ENCODE measurements at regions of chr9 and their contacts with region 1.

Region 1: GRCh38 chr9:119537138-119537537 is 167.9 kb upstream of the BRINP1 start:
- DNase-seq: no peak

Region 2: DNA sequence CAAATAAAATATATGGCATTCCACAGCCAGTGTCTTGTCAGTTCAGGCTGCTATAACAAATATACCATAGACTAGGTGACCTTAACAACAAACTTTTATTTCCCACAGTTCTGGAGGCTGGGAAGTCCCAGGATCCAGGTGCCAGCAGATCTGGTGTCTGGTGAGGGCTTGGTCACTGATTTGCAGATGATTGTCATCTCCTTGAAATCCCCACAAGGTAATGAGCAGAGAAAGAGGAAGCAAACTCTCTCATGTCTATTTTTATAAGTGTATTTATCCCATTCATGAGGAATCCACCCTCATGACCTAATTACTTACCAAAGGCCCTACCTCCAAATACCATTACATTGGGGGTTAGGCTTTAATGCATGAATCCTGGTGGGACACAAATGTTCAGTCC is 1169.8 kb before region 1 on chr9:
- intact Hi-C with region 1: loop called in 1 of 2 experiments (anchors 5 kb)
- DNase-seq: no peak

Region 3: GRCh38 chr9:119768266-119768665 is 231.1 kb after region 1 on chr9:
- intact Hi-C with region 1: no loop called
- DNase-seq: no peak

Measured in posterior vena cava (tissue), 2 donors.